Left ventricle myocardium inferior (tissue), 1 donor: ENCODE measurements at regions of chr1 and their contacts with region 1.

Region 1: GRCh38 chr1:19123837-19124236 is 86.2 kb downstream of the UBR4 start:
- DNase-seq: no peak
- H3K4me3 ChIP-seq: no peak overlapping the region
- H3K27ac ChIP-seq: peak overlapping the region; percentile 15
- H3K4me1 ChIP-seq: peaks cover 29% of the 10 kb centered on the region
- H3K27me3 ChIP-seq: no peaks in the 10 kb centered on the region
- CTCF ChIP-seq: no peak

Region 2: GRCh38 chr1:19179597-19180264 is 55.9 kb after region 1 on chr1:
- intact Hi-C with region 1: loop called (anchors 10 kb)
- DNase-seq: no peak
- H3K4me3 ChIP-seq: no peak overlapping the region
- H3K27ac ChIP-seq: peak overlapping the region; percentile 40
- H3K4me1 ChIP-seq: peaks cover 17% of the 10 kb centered on the region
- H3K27me3 ChIP-seq: no peaks in the 10 kb centered on the region
- CTCF ChIP-seq: peak; percentile 56

Region 3: GRCh38 chr1:19240673-19241538 is 117.1 kb after region 1 on chr1:
- intact Hi-C with region 1: no loop called
- DNase-seq: peak; percentile 29
- H3K4me3 ChIP-seq: no peak overlapping the region
- H3K27ac ChIP-seq: no peak overlapping the region
- H3K4me1 ChIP-seq: peaks cover 9% of the 10 kb centered on the region
- H3K27me3 ChIP-seq: no peaks in the 10 kb centered on the region
- CTCF ChIP-seq: peak; percentile 98

Region 4: DNA sequence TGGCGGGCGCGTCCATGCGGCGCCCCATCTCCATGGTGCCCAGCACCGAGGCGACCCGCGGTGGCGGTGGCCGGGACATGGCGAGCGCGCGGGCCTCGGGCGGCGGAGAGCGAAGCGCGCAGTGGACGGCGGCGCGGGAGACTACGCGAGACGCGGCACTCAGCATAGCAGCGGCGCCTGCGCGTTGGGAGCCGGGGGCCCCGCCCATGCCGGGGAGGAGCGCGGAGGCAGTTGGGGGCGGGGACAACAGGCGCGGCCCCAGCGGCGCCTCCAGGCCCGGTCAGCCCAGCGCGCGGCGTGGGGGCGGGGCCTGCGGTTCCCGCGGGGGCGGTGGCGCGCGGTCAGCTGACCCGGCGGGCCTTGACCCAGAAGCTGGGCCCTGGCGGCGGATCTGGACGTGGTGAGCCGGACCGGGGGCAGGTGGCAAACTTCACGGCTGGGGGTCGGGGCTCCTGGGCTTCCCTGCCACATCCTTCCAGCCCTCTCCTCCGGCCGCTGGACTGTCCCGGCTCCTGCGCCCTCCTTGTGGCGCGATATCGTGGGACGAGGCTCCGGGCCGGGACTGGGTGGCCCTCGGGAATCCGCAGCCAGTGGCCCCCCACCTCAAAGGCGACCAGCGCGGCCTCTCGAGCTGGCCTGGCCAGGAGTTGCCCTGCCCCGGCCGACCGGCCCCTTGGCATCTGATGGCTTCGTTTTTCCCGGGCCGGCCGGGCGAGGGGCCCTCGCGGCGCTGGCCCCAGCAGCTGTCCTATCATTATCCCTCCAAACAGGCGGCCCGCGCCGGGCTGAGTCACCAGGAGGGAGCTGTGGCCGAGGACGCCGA is 188.3 kb after region 1 on chr1 and contains the starts of genes AKR7A2 and SLC66A1:
- intact Hi-C with region 1: no loop called
- DNase-seq: peak; percentile 93
- H3K4me3 ChIP-seq: peak within 1 kb of the TSS; percentile 88
- H3K27ac ChIP-seq: peak within 1 kb of the TSS; percentile 88
- H3K4me1 ChIP-seq: peaks cover 42% of the 10 kb centered on the region
- H3K27me3 ChIP-seq: no peaks in the 10 kb centered on the region
- CTCF ChIP-seq: peak; percentile 43
- total RNA-seq, gene AKR7A2: 43.7 TPM
- total RNA-seq, gene SLC66A1: 5.8 TPM